ENCODE measurements at regions of chr16 and their contacts with region 1.

Region 1: GRCh38 chr16:27679899-27680298 is 130.0 kb downstream of the KATNIP start:
- DNase-seq: no peak
- H3K4me3 ChIP-seq: no peak overlapping the region
- H3K27ac ChIP-seq: no peak overlapping the region
- H3K27me3 ChIP-seq: no peaks in the 10 kb centered on the region
- CTCF ChIP-seq: no peak

Region 2: GRCh38 chr16:27617665-27618064 is 62.2 kb before region 1 on chr16:
- CTCF ChIA-PET with region 1: interaction called, 13 read pairs
- POLR2A ChIA-PET with region 1: no interaction called
- DNase-seq: no peak
- H3K4me3 ChIP-seq: no peak overlapping the region
- H3K27ac ChIP-seq: no peak overlapping the region
- H3K27me3 ChIP-seq: no peaks in the 10 kb centered on the region
- CTCF ChIP-seq: no peak